Left cardiac atrium (tissue), 4 donors: ENCODE measurements at regions of chr11 and their contacts with region 1.

Region 1: GRCh38 chr11:33742249-33742851 is 6.1 kb upstream of the CD59 start:
- DNase-seq: no peak
- ATAC-seq: peak; percentile 41 to 62

Region 2: GRCh38 chr11:33542921-33543320 is 199.4 kb before region 1 on chr11:
- intact Hi-C with region 1: loop called in 1 of 2 experiments (anchors 5 kb)
- DNase-seq: peak; percentile 46
- ATAC-seq: peak in 1 of 2 donors; percentile 54

Region 3: DNA sequence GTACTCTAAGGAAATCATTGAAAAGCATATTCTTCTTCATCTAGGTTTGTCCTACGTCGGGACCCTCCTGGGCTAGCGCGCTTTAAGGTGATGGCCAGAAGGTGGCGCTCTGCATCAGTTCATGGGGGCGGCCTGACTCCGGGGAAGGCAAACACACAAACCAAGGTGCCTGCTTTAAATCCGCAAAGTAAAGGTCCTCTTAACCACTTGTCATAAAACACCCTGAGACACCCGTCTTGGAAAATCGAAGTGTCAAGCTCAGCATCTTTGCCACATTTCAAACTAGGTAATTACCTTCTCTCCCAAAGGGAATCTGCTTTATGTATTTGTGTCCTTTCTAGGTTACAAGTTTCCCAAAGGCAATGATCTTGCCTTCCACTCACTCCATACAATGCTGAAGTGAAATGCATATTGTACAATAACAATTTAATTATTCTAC is 115.6 kb after region 1 on chr11:
- intact Hi-C with region 1: no loop called
- DNase-seq: peak; percentile 82
- ATAC-seq: peak; percentile 85 to 93